Activated CD4-positive, alpha-beta T cell treated with anti-CD3 and anti-CD28 coated beads, Interleukin-2, amount 10 ng/mL, durations not matched to agents 24 days and 14 days (primary cell): ENCODE measurements at regions of chr10 and their contacts with region 1.

Region 1: DNA sequence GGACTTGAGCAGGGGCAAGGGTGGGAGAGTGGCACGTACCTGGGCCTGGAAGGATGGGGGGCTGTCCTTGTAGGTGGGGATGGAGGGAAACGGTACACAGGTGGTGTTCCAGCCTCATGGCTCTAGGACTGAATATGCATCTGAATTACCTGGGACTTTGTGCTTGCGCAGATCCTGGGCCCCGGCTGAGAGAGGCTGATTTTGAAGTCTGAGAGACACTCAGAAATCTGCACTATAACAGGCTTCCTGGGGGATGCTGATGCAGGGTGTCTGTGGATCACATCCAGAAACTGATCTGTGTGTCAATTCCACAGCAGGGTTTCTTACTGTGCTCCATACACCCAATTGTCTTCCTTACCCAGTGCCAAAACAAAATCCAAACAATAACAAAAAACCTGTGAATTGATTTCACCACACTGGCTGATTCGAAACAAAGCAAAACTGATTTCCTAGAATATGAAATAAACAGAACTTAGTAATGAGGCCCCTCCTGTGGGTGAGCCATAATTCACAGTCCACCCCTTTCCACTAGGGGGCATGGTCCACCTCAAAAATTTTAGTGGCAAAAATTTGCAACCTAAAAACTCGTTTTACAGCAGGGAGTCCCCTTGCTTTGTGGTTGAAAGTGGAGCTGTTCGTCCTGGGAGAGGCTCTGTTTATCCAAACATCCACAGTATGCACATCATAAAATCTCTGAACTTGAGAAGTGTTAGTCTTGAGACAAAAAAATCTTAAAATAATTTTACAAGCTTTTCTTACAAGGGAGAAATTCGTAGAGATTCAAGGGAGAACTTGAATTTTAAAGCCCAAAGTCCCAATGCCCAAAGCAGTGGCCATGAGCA is 32.0 kb upstream of the PLEKHA1 start:
- DNase-seq: peak; percentile 83
- H3K4me3 Mint-ChIP-seq: no peak overlapping the region
- H3K27ac Mint-ChIP-seq: no peak overlapping the region
- H3K4me1 Mint-ChIP-seq: no peaks in the 10 kb centered on the region
- H3K27me3 Mint-ChIP-seq: peaks cover 5% of the 10 kb centered on the region

Region 2: GRCh38 chr10:122267849-122268737 is 74.4 kb before region 1 on chr10:
- intact Hi-C with region 1: no loop called
- DNase-seq: peak; percentile 83
- H3K4me3 Mint-ChIP-seq: no peak overlapping the region
- H3K27ac Mint-ChIP-seq: no peak overlapping the region
- H3K4me1 Mint-ChIP-seq: no peaks in the 10 kb centered on the region
- H3K27me3 Mint-ChIP-seq: peaks cover 4% of the 10 kb centered on the region

Region 3: GRCh38 chr10:122298598-122299301 is 43.8 kb before region 1 on chr10:
- intact Hi-C with region 1: loop called (anchors 2 kb)
- DNase-seq: peak; percentile 87
- H3K4me3 Mint-ChIP-seq: no peak overlapping the region
- H3K27ac Mint-ChIP-seq: peak overlapping the region; percentile 18
- H3K4me1 Mint-ChIP-seq: peaks cover 8% of the 10 kb centered on the region
- H3K27me3 Mint-ChIP-seq: peaks cover 4% of the 10 kb centered on the region